Activated B cell treated with CpG ODN at 0.5 μM for 24 hours (primary cell): ENCODE measurements at regions of chr1 and their contacts with region 1.

Region 1: DNA sequence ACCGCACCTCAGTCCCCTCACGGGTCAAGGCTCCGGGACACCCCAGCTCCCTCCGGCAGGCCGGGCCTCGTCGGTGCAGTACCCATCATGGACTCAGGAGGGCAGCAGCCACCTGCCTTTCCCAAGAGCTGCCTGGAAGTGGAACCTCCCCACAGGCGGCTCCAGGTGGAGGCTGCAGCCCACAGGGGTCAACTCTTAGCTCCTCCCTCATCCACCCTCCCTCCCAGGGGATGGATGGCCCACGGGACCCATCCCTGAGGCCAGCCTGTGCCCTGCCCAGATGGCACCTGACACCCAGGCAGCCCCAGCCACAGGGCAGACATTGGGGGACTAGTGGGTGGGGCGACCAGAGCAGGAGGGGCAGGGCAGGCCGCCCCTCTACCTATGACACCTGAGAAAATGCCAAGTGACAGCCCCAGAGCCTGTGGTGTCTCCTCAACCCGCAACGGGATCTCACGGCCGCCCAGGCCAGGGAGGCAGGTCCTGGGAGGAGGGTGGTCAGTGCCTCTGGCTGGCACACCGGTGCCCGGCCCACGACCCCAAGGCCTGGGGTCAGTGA is 1.2 kb upstream of the ARHGEF16 start:
- DNase-seq: peak; percentile 73
- ATAC-seq: peak; percentile 81
- H3K4me3 Mint-ChIP-seq: peak overlapping the region; percentile 41
- H3K27ac Mint-ChIP-seq: no peak overlapping the region
- H3K4me1 Mint-ChIP-seq: peaks cover 2% of the 10 kb centered on the region
- H3K27me3 Mint-ChIP-seq: peaks cover 19% of the 10 kb centered on the region
- CTCF ChIP-seq: peak; percentile 46

Region 2: GRCh38 chr1:3431266-3431665 is 22.0 kb before region 1 on chr1:
- CTCF ChIA-PET with region 1: no interaction called
- POLR2A ChIA-PET with region 1: no interaction called
- intact Hi-C with region 1: no loop called
- DNase-seq: no peak
- ATAC-seq: no peak
- H3K4me3 Mint-ChIP-seq: no peak overlapping the region
- H3K27ac Mint-ChIP-seq: no peak overlapping the region
- H3K4me1 Mint-ChIP-seq: no peaks in the 10 kb centered on the region
- H3K27me3 Mint-ChIP-seq: no peaks in the 10 kb centered on the region
- CTCF ChIP-seq: no peak

Region 3: DNA sequence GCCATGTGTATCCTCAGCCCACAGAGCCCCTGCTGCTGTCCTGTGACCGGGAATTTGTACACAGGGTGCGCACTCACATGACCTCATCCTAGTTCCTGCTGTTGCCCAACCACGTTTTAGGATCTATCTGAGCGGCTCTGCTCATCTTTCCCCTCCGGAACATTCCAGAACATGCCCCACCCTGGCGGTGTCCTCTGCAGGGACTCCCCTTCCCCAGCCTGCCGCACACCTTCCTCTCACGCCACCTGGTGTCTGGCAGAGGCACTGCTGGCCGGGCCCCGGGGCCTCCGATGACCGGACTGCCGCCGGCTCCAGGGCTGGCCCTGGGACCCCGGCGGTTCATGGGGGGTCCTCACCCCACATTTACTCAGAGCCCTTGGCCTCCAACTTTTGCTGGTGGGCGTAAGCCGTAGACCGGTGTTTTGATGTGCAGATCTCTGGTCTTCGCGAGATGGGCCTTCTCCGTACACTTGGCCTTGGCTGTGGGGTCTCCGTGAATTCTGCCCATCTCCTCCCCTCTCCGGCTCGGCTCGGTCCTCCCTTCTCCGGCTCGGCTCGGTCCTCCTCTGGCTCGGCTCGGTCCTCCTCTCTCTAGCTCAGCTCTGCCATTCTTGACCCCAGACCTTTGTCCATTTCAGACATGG is 30.6 kb after region 1 on chr1:
- CTCF ChIA-PET with region 1: interaction called, 11 read pairs
- POLR2A ChIA-PET with region 1: no interaction called
- intact Hi-C with region 1: loop called (anchors 1 kb)
- DNase-seq: peak; percentile 44
- ATAC-seq: peak; percentile 60
- H3K4me3 Mint-ChIP-seq: no peak overlapping the region
- H3K27ac Mint-ChIP-seq: no peak overlapping the region
- H3K4me1 Mint-ChIP-seq: no peaks in the 10 kb centered on the region
- H3K27me3 Mint-ChIP-seq: peaks cover 4% of the 10 kb centered on the region
- CTCF ChIP-seq: no peak